Heart left ventricle (tissue), 16 donors: ENCODE measurements at regions of chr1 and their contacts with region 1.

Region 1: DNA sequence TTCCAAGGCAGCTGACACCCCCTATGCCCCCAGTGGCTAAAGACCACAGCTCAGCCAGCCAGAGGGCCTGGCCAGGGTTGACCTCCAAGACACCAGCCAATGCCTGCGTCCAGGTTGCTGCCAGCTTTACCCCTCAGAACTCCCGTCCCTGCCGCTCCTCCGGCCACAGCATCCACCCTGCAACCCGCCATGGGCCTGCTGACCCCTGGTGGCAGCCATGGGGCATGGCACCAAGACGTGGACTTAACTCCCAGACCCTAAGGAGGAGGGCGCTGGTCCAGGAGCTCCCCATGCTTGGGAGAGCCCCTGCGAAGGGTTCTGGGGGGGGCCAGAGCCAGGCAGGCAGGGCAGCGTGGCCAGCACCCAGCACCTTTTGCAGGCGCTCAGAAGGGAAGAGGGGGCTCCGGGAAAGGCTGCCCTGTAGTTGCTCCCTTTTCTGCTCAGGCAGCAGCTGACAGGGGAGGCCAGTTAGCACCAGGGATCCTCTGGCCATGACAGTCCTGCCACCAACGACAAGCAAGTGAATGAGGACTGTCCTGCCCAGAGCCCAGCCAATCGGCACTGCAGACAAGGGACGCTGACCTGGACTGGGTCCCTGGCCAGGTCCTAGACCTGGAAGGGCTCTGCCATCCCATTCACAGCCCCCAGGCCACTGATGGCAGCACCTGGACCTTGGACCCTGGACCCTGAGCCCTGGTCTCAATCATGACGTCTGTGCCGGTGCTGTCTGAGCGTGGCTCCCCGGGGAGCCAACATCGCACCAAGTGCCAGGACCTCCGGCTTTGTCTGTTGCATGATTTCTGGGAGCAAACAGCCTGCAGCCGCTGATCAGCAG is 246.2 kb downstream of the NPHP4 start:
- DNase-seq: peak; percentile 46 to 83 (median 61)
- ATAC-seq: peak; percentile 53 to 93 (median 80)
- H3K4me3 ChIP-seq: no peak overlapping the region
- H3K27ac ChIP-seq: no peak overlapping the region
- H3K4me1 ChIP-seq: no peaks in the 10 kb centered on the region
- H3K27me3 ChIP-seq: peaks cover 0 to 51% (median 15%) of the 10 kb centered on the region in 9 donors
- CTCF ChIP-seq: peak; percentile 83 to 94 (median 88)
- POLR2A ChIP-seq: no peak

Region 2: DNA sequence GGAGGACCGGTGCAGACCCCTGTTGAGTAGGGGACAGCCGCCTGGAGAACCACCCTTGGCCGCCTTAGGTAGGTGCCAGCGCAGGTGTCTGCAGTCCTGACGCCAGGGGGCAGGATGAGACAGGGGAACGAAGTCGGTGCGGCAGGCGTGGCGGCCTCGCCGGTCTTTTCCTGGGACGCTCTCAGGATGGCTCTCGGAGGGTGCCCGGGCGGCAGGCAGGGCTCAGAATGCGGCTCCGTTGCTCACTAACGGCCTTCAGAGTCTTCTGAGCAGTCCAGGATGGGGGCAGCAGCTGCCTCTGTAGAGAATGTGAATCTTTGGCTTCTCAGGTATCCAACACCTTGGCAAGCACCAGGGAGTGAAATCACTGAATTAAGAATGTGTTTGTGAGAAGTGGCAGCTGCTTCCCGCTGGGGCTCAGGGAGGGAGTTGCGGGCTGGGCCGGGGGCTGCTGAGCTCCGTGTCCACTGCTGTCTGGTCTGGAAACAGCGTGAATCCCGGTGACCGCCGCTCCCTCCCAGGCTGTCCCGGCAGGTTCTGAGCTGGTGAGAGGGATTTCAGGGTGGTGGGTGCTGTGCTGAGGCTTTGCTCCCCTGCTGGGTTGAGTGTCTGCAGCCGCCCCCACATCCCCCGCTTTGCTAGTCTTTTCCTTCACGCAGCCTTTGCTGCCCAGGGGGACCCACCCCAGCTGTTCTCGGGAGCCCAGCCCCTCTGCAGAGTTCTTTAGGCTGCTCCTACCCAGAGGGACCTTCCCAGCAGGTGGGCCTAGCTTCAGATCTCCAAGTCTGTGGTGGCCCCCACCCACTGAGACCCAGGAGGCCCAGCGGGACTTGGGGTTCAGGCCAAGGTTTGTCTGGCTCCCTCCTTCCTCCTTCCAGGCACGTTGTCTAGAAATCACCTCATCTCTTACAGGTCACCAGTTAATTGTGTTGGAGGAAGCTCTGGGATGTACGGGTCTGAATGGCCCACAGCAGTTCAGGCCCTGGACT is 1834.8 kb before region 1 on chr1:
- intact Hi-C with region 1: loop called in 8 of 10 experiments (anchors 5 to 10 kb)
- DNase-seq: peak in 4 of 5 donors; percentile 62 to 83 (median 64)
- ATAC-seq: peak in 3 of 4 donors; percentile 66 to 83 (median 77)
- H3K4me3 ChIP-seq: no peak overlapping the region
- H3K27ac ChIP-seq: no peak overlapping the region
- H3K4me1 ChIP-seq: peaks cover 0 to 7% (median 0%) of the 10 kb centered on the region in 12 donors
- H3K27me3 ChIP-seq: peaks cover 0 to 46% (median 15%) of the 10 kb centered on the region in 9 donors
- CTCF ChIP-seq: peak; percentile 44 to 76 (median 62)
- POLR2A ChIP-seq: no peak

Region 3: DNA sequence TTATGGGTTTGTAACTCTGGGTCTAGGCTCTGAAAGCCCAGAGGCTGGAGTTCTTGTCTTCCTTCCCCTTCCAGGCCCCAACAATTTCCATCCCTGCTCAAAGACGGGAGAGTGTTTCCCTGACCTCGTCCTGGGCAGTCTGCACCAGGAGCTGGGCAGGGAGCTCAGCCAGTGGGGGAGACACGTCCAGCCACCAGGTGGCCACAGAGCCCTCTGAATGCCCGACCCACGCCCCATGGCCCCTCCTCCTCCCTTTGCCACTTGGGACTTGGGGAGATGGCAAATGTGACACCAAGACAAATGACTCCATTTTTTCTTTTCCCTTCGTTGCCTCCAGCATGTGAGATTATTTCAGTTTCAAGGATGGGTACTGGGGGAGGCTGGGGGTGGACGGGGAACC is 1251.4 kb before region 1 on chr1:
- intact Hi-C with region 1: loop called in 1 of 10 experiments (anchors 10 kb)
- DNase-seq: peak in 1 of 5 donors; percentile 47
- ATAC-seq: peak; percentile 32 to 78 (median 72)
- H3K4me3 ChIP-seq: no peak overlapping the region
- H3K27ac ChIP-seq: no peak overlapping the region
- H3K4me1 ChIP-seq: no peaks in the 10 kb centered on the region
- H3K27me3 ChIP-seq: peaks cover 0 to 20% (median 0%) of the 10 kb centered on the region in 9 donors
- CTCF ChIP-seq: peak in 10 of 12 donors; percentile 12 to 50 (median 31)
- POLR2A ChIP-seq: no peak

Region 4: GRCh38 chr1:4652631-4653327 is 1093.2 kb before region 1 on chr1:
- intact Hi-C with region 1: loop called in 9 of 10 experiments (anchors 5 to 10 kb)
- DNase-seq: peak; percentile 33 to 80 (median 44)
- ATAC-seq: peak in 3 of 4 donors; percentile 78 to 81 (median 80)
- H3K4me3 ChIP-seq: no peak overlapping the region
- H3K27ac ChIP-seq: no peak overlapping the region
- H3K4me1 ChIP-seq: peaks cover 0 to 31% (median 5%) of the 10 kb centered on the region in 12 donors
- H3K27me3 ChIP-seq: peaks cover 22 to 92% (median 44%) of the 10 kb centered on the region in 9 donors
- CTCF ChIP-seq: peak; percentile 87 to 98 (median 96)
- POLR2A ChIP-seq: no peak

Region 5: DNA sequence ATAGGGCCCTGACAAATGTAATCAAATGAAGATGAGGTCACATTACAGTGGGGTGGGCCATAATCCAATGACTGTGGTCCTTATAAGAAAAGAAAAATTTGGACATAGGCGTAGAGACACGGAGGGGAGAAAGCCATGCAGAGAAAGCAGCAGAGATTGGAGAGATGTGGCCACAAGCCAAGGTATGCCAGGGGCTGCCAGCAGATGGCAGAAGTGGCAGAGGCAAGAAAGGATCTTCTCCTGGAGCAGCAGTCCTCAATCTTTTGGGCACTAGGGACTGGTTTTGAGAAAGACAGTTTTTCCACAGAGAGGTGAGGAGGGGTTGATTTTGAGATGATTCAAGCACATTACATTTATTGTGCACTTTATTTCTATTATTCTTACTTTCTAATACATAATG is 108.8 kb before region 1 on chr1:
- intact Hi-C with region 1: loop called in 5 of 10 experiments (anchors 5 kb)
- DNase-seq: no peak
- ATAC-seq: no peak
- H3K4me3 ChIP-seq: no peak overlapping the region
- H3K27ac ChIP-seq: no peak overlapping the region
- H3K4me1 ChIP-seq: no peaks in the 10 kb centered on the region
- H3K27me3 ChIP-seq: peaks cover 0 to 52% (median 0%) of the 10 kb centered on the region in 9 donors
- CTCF ChIP-seq: peak in 9 of 12 donors; percentile 9 to 37 (median 29)
- POLR2A ChIP-seq: no peak

Region 6: DNA sequence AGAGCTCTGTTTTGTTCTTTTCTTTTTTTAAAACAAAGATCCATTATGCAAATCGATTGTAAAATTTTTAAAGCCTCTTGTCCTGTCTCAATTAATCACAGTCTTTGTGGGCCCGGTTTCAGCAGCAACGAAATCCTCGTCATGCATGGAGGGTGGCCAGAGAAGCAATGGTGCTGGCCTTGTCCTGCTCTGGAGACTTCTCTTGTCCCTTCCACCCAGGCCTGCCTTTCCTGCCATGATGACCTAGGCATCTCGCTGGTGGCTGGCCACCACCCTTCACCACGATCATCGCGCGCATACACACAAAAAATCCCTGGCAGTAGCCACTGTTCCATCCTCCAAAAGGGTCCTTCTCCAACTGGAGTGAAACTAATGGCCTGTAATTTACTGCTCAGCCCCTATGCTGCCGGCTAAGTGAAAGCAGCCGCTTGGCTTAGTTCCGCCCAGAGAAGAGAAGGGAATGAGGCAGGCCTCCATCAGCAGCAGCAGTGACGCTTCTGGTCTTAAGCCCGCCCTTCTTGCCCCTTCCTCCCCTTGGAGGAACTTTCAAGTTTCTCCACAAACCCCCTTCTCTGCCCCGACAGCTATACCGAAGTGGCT is 63.3 kb before region 1 on chr1:
- intact Hi-C with region 1: no loop called
- DNase-seq: no peak
- ATAC-seq: no peak
- H3K4me3 ChIP-seq: no peak overlapping the region
- H3K27ac ChIP-seq: no peak overlapping the region
- H3K4me1 ChIP-seq: no peaks in the 10 kb centered on the region
- H3K27me3 ChIP-seq: peaks cover 0 to 18% (median 0%) of the 10 kb centered on the region in 9 donors
- CTCF ChIP-seq: no peak
- POLR2A ChIP-seq: no peak